Aorta (tissue), 5 donors: ENCODE measurements at regions of chr9 and their contacts with region 1.

Region 1: GRCh38 chr9:87803622-87804345 is 77.9 kb downstream of the CTSL start:
- DNase-seq: no peak
- ATAC-seq: no peak
- H3K4me3 ChIP-seq: no peak overlapping the region
- H3K27ac ChIP-seq: no peak overlapping the region
- H3K4me1 ChIP-seq: no peaks in the 10 kb centered on the region
- H3K27me3 ChIP-seq: no peaks in the 10 kb centered on the region

Region 2: GRCh38 chr9:87862536-87863268 is 58.9 kb after region 1 on chr9:
- intact Hi-C with region 1: loop called in 1 of 2 experiments (anchors 10 kb)
- DNase-seq: no peak
- ATAC-seq: no peak
- H3K4me3 ChIP-seq: no peak overlapping the region
- H3K27ac ChIP-seq: no peak overlapping the region
- H3K4me1 ChIP-seq: no peaks in the 10 kb centered on the region
- H3K27me3 ChIP-seq: no peaks in the 10 kb centered on the region

Region 3: GRCh38 chr9:88179062-88179521 is 375.3 kb after region 1 on chr9:
- intact Hi-C with region 1: no loop called
- DNase-seq: no peak
- ATAC-seq: peak; percentile 44
- H3K4me3 ChIP-seq: no peak overlapping the region
- H3K27ac ChIP-seq: no peak overlapping the region
- H3K4me1 ChIP-seq: no peaks in the 10 kb centered on the region
- H3K27me3 ChIP-seq: no peaks in the 10 kb centered on the region